Gastrocnemius medialis (tissue), 4 donors: ENCODE measurements at regions of chr5 and their contacts with region 1.

Region 1: DNA sequence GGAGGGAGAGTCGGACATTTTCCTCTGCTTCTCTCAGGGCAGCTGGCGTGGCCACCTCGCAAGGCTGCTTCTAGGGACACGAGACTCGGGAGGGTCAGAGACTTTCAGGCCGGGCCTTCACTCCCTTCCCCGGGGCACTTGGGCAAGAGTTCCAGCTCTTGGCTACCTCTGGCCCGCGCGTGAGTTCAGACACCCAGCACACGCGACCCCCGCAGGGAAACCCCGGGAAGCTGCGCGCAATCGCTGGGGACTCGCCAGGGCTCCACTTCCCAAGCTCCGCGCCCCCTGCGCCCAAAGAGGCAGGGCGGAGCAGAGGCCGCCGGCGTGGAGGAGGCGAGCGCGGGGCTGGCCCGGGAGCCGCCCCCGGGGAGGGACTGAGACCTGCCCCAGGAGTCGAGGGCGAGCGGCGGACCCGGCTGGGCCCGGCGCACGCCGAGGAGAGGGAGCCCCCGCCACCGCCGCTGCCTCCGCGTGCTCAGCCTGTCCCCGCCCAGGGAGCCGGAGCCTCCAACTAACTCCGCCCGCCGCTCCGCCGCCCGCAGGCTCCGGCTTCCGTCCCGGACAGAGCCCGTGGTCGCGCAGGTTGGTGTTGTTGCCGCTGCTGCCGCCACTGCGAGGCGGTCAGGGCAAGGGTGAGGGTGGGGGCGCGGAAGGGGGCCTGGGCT is at the start of gene PAM:
- DNase-seq: peak; percentile 68 to 71
- ATAC-seq: peak; percentile 57 to 61
- H3K4me3 ChIP-seq: peak within 1 kb of the TSS; percentile 63 to 97 (median 88)
- H3K27ac ChIP-seq: peak within 1 kb of the TSS; percentile 88 to 97 (median 92)
- H3K4me1 ChIP-seq: peaks cover 36% of the 10 kb centered on the region in 2 donors
- H3K27me3 ChIP-seq: no peaks in the 10 kb centered on the region
- CTCF ChIP-seq: no peak
- POLR2A ChIP-seq: peak; percentile 66 to 77
- total RNA-seq, gene PAM: 102 to 210 (median 172) TPM

Region 2: GRCh38 chr5:102617191-102618187 is 137.4 kb before region 1 on chr5:
- in situ Hi-C with region 1: no loop called
- intact Hi-C with region 1: no loop called
- DNase-seq: no peak
- ATAC-seq: peak; percentile 63 to 65
- H3K4me3 ChIP-seq: no peak overlapping the region
- H3K27ac ChIP-seq: peak overlapping the region in 1 of 4 donors; percentile 14
- H3K4me1 ChIP-seq: no peaks in the 10 kb centered on the region
- H3K27me3 ChIP-seq: no peaks in the 10 kb centered on the region
- CTCF ChIP-seq: no peak
- POLR2A ChIP-seq: no peak

Region 3: DNA sequence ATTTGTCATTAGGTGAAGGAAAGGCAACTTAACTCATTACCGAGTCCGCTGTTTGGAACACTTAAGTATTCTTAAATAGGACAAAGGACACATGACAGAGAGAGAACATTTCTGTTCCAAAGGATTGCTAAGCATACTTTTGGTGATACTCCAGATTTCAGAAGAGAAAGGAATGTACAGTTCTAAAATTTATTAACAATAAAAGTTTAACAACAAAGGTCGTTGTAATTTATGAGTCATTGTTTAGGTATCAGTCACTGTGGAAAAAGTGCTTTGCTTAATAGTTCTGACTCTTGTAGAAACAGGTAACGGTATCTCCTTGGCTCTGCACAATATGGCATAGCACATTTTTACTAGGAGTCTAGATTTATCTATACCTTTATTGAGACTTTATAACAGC is 36.1 kb before region 1 on chr5:
- in situ Hi-C with region 1: no loop called
- intact Hi-C with region 1: loop called (anchors 1 kb)
- DNase-seq: no peak
- ATAC-seq: no peak
- H3K4me3 ChIP-seq: no peak overlapping the region
- H3K27ac ChIP-seq: no peak overlapping the region
- H3K4me1 ChIP-seq: no peaks in the 10 kb centered on the region
- H3K27me3 ChIP-seq: no peaks in the 10 kb centered on the region
- CTCF ChIP-seq: no peak
- POLR2A ChIP-seq: no peak

Region 4: GRCh38 chr5:102865510-102866236 is 110.8 kb after region 1 on chr5:
- in situ Hi-C with region 1: no loop called
- intact Hi-C with region 1: loop called (anchors 10 kb)
- DNase-seq: peak; percentile 76 to 79
- ATAC-seq: peak; percentile 92 to 95
- H3K4me3 ChIP-seq: peak overlapping the region; percentile 67 to 76 (median 71)
- H3K27ac ChIP-seq: peak overlapping the region; percentile 84 to 94 (median 92)
- H3K4me1 ChIP-seq: peaks cover 51 to 62% of the 10 kb centered on the region in 2 donors
- H3K27me3 ChIP-seq: no peaks in the 10 kb centered on the region
- CTCF ChIP-seq: no peak
- POLR2A ChIP-seq: peak; percentile 57 to 84

Region 5: GRCh38 chr5:103010168-103010567 is 255.3 kb after region 1 on chr5:
- in situ Hi-C with region 1: no loop called
- intact Hi-C with region 1: no loop called
- DNase-seq: no peak
- ATAC-seq: no peak
- H3K4me3 ChIP-seq: no peak overlapping the region
- H3K27ac ChIP-seq: no peak overlapping the region
- H3K4me1 ChIP-seq: no peaks in the 10 kb centered on the region
- H3K27me3 ChIP-seq: no peaks in the 10 kb centered on the region
- CTCF ChIP-seq: no peak
- POLR2A ChIP-seq: no peak

Region 6: GRCh38 chr5:103119765-103120606 is 365.1 kb after region 1 on chr5 and contains the starts of genes GIN1 and PPIP5K2:
- in situ Hi-C with region 1: no loop called
- intact Hi-C with region 1: loop called (anchors 5 kb)
- DNase-seq: peak; percentile 92 to 94
- ATAC-seq: peak; percentile 98 to 100
- H3K4me3 ChIP-seq: peak within 1 kb of the TSS; percentile 70 to 91 (median 86)
- H3K27ac ChIP-seq: peak within 1 kb of the TSS; percentile 86 to 96 (median 92)
- H3K4me1 ChIP-seq: peaks cover 28 to 30% of the 10 kb centered on the region in 2 donors
- H3K27me3 ChIP-seq: no peaks in the 10 kb centered on the region
- CTCF ChIP-seq: no peak
- POLR2A ChIP-seq: peak; percentile 46 to 53
- total RNA-seq, gene GIN1: 4.6 to 11.2 (median 6.9) TPM
- total RNA-seq, gene PPIP5K2: 3.5 to 7.0 (median 4.4) TPM

Region 7: GRCh38 chr5:103258368-103258956 is 503.6 kb after region 1 on chr5 and contains the start of gene MACIR:
- in situ Hi-C with region 1: no loop called
- intact Hi-C with region 1: loop called (anchors 10 kb)
- DNase-seq: peak; percentile 95 to 97
- ATAC-seq: peak; percentile 83 to 86
- H3K4me3 ChIP-seq: peak within 1 kb of the TSS; percentile 88 to 98 (median 93)
- H3K27ac ChIP-seq: peak within 1 kb of the TSS; percentile 81 to 95 (median 92)
- H3K4me1 ChIP-seq: peaks cover 41% of the 10 kb centered on the region in 2 donors
- H3K27me3 ChIP-seq: no peaks in the 10 kb centered on the region
- CTCF ChIP-seq: peak in 1 of 5 experiments; percentile 35
- POLR2A ChIP-seq: peak; percentile 63 to 80
- total RNA-seq, gene MACIR: 8.0 to 26.6 (median 21.7) TPM